Panc1 (cell line): ENCODE measurements at regions of chr1 and their contacts with region 1.

Region 1: DNA sequence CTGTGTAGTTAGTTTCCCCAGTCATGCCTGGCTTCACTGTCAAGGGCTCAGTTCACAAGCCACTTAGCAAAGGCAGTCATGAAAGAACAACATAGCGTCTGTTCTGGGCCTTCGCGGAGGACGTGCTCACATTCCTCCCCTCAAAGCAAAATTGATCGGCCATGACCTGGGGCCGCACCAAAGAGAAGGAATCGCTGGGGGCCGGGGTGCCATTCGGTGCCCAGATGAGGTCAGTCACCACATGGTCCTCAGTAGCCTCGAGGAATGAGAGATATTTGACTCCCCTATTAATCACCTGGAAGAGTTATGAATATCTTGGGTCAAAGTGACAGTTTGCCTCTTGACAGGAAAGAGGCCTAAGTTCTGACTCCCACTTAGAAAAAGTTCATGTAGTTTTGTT is 251.1 kb upstream of the JUN start:
- DNase-seq: no peak
- ATAC-seq: no peak
- H3K4me3 ChIP-seq: no peak overlapping the region
- H3K27ac ChIP-seq: no peak overlapping the region
- H3K4me1 ChIP-seq: no peaks in the 10 kb centered on the region
- H3K27me3 ChIP-seq: no peaks in the 10 kb centered on the region
- CTCF ChIP-seq: no peak

Region 2: DNA sequence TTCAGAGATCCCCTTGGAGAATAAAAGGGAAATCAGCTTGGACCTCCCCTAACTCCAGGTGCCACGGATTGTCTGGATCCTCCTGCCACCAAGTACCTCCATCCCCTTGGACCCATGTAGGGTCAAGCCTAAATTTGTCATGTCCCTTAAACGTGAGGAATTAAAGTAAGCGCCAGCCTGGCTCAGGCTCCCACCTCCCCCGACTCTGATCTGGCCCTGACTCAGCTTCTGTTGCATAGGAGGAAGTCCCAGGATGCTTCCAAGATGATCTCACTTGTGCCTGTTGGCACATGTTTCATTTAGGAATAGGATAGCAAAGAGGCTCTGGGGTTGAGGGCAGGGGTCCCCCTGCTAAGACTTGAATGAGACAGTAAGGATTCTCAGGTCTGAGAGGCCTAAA is 19.2 kb before region 1 on chr1:
- CTCF ChIA-PET with region 1: interaction called, 11 read pairs
- POLR2A ChIA-PET with region 1: no interaction called
- in situ Hi-C with region 1: no loop called
- intact Hi-C with region 1: no loop called
- DNase-seq: no peak
- ATAC-seq: no peak; the same call in 1 of the 2 replicates
- H3K4me3 ChIP-seq: no peak overlapping the region
- H3K27ac ChIP-seq: no peak overlapping the region
- H3K4me1 ChIP-seq: peaks cover 22% of the 10 kb centered on the region
- H3K27me3 ChIP-seq: no peaks in the 10 kb centered on the region
- CTCF ChIP-seq: no peak